Activated CD4-positive, alpha-beta memory T cell treated with anti-CD3 and anti-CD28 coated beads, Interleukin-2, amount 10 ng/mL, durations not matched to agents 7 days and 5 days (primary cell): ENCODE measurements at regions of chr2 and their contacts with region 1.

Region 1: DNA sequence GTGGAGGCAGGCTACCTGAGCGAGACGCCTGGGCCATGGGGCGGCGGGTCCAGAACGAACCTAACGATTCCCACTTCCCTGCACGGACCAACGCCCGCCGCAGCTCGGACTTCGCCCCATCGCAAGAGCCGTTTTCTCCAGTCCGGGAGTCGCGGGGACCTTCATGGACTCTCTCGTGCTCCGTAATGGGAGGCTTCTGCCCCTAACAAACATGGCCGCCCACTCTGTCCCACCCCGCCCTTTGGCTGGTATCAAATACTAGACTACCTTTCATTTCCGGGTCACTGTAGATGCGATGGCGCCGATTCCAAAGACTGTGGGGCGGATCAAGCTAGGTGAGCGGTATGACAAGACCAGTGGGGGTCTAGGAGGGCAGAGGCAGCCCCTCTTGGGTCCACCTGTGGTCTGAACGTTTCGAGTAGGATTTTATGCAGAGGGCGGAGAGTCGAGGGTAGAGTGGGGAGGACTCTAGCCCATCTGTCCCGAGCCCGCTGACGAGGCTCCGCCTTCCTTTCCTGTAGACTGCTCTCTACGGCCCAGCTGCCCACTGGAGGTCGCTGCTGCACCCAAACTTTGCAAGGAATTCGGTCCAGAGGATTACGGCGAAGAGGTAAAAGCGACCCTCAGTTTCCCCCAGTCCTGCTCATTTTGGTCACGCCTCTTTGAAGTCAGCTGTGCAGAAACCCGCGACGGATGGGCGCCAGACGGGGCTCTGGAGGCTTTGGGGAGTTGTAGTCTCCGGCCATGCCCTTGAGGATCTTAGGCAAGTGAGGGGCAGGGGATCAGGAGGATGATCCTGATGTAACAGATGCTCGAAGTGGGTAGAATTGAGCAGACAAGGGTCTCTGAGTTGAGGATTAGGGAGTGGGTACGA is at the starts of genes CCDC142 and TTC31:
- DNase-seq: peak; percentile 94
- H3K4me3 Mint-ChIP-seq: peak within 1 kb of the TSS; percentile 99
- H3K27ac Mint-ChIP-seq: peak within 1 kb of the TSS; percentile 98
- H3K4me1 Mint-ChIP-seq: peaks cover 48% of the 10 kb centered on the region
- H3K27me3 Mint-ChIP-seq: no peaks in the 10 kb centered on the region
- total RNA-seq, gene CCDC142: 20.9 to 25.0 TPM
- total RNA-seq, gene TTC31: 42.3 to 42.9 TPM

Region 2: DNA sequence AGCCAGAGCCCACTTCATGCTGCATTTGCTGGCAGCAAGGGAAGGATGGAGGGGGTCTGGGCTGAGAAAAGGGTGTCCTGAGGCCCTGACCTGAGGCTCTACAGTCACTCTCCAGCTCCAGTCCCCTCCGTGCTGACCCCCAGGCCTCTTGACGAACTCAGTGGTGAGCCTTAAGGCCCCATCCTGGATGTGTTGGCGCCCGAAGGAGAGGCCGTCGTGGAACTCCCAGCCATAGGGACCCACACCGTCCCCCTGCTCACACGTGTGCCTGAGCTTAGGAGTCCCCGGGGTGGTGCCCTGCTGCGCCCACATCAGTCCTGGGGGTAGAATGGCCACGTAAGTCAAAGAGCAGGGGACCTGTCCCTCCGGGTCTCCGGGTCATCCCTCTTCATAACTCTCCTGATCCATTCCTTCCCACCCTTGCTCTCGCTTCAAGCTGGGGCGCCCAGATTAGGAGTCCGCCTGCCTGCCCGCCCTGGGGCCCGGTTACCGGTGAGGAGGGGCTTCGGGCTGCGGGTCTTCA is 18.6 kb before region 1 on chr2:
- CTCF ChIA-PET with region 1: interaction called, 9 read pairs
- POLR2A ChIA-PET with region 1: interaction called, 103 read pairs
- DNase-seq: no peak
- H3K4me3 Mint-ChIP-seq: peak overlapping the region; percentile 99
- H3K27ac Mint-ChIP-seq: peak overlapping the region; percentile 67
- H3K4me1 Mint-ChIP-seq: peaks cover 41% of the 10 kb centered on the region
- H3K27me3 Mint-ChIP-seq: no peaks in the 10 kb centered on the region

Region 3: DNA sequence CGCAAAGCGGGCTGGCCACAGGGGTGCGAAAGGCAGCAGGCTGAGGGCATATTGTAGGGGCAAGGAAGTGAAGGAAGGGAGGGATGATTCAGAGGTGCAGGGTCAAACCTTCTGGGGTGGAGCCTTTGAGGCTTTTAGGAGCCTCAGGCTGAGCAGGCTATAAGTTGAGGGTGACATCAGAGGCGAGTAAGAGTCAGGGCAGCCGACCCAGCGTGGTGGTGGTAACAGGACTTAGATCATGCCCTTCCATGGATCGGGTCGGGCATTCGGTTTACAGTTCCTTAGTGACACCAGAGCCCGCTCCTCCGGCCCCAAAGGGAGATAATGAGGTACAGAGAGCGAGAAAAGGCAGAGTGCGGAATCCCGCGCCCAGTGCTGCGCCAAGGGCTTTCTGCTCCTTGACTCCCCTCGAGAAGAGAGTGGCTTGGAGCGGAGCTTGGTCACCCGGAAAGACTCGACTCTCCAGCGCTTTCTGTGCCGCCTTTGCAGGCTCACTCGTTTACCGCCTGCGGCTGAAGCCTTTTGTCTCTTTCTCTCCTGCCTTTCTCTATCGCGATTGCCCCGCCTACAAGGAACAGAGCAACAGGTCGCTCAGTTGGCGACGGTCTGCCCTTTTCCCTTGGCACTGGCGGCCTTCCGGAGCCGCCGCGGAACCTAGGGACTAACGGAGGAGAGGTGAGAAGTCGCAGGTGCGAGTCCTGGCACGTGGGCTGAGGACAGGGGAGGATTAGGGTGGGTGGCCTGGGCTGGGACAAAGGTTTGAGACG is 15.6 kb after region 1 on chr2:
- CTCF ChIA-PET with region 1: interaction called, 12 read pairs
- POLR2A ChIA-PET with region 1: interaction called, 31 read pairs
- DNase-seq: peak; percentile 60
- H3K4me3 Mint-ChIP-seq: peak overlapping the region; percentile 80
- H3K27ac Mint-ChIP-seq: peak overlapping the region; percentile 77
- H3K4me1 Mint-ChIP-seq: peaks cover 44% of the 10 kb centered on the region
- H3K27me3 Mint-ChIP-seq: peaks cover 45% of the 10 kb centered on the region

Region 4: GRCh38 chr2:74515981-74516633 is 33.1 kb after region 1 on chr2:
- CTCF ChIA-PET with region 1: interaction called, 4 read pairs
- POLR2A ChIA-PET with region 1: interaction called, 36 read pairs
- DNase-seq: peak; percentile 81
- H3K4me3 Mint-ChIP-seq: peak overlapping the region; percentile 64
- H3K27ac Mint-ChIP-seq: no peak overlapping the region
- H3K4me1 Mint-ChIP-seq: peaks cover 35% of the 10 kb centered on the region
- H3K27me3 Mint-ChIP-seq: peaks cover 80% of the 10 kb centered on the region

Region 5: GRCh38 chr2:74587664-74588277 is 104.7 kb after region 1 on chr2:
- CTCF ChIA-PET with region 1: interaction called, 107 read pairs
- POLR2A ChIA-PET with region 1: interaction called, 16 read pairs
- DNase-seq: peak; percentile 73
- H3K4me3 Mint-ChIP-seq: no peak overlapping the region
- H3K27ac Mint-ChIP-seq: no peak overlapping the region
- H3K4me1 Mint-ChIP-seq: peaks cover 36% of the 10 kb centered on the region
- H3K27me3 Mint-ChIP-seq: peaks cover 13% of the 10 kb centered on the region